Naive thymus-derived CD4-positive, alpha-beta T cell (primary cell): ENCODE measurements at regions of chr1 and their contacts with region 1.

Region 1: GRCh38 chr1:231162297-231162969 is 575 bp downstream of the TRIM67 start:
- DNase-seq: peak in 7 of 9 donors; percentile 18 to 52 (median 27)
- ATAC-seq: peak; percentile 57
- H3K4me3 ChIP-seq: no peak overlapping the region
- H3K4me3 Mint-ChIP-seq: peak overlapping the region in 4 of 10 donors; percentile 36 to 61 (median 49)
- H3K27ac ChIP-seq: no peak overlapping the region
- H3K27ac Mint-ChIP-seq: peak overlapping the region in 1 of 9 donors; percentile 52
- H3K4me1 ChIP-seq: peaks cover 0 to 7% of the 10 kb centered on the region in 2 donors
- H3K4me1 Mint-ChIP-seq: peaks cover 0 to 9% (median 2%) of the 10 kb centered on the region in 7 donors
- H3K27me3 ChIP-seq: peaks cover 0 to 9% of the 10 kb centered on the region in 2 donors
- H3K27me3 Mint-ChIP-seq: peaks cover 52 to 75% (median 67%) of the 10 kb centered on the region in 5 donors

Region 2: GRCh38 chr1:230426246-230427093 is 736.0 kb before region 1 on chr1 and contains the start of gene PGBD5:
- CTCF ChIA-PET with region 1: no interaction called
- POLR2A ChIA-PET with region 1: no interaction called
- intact Hi-C with region 1: loop called in 1 of 2 experiments (anchors 10 kb)
- DNase-seq: peak; percentile 5 to 79 (median 44)
- ATAC-seq: peak; percentile 84
- H3K4me3 ChIP-seq: no peak within 1 kb of the TSS
- H3K4me3 Mint-ChIP-seq: peak within 1 kb of the TSS; percentile 65 to 88 (median 77)
- H3K27ac ChIP-seq: no peak within 1 kb of the TSS
- H3K27ac Mint-ChIP-seq: peak within 1 kb of the TSS in 1 of 9 donors; percentile 3
- H3K4me1 ChIP-seq: peaks cover 0 to 3% of the 10 kb centered on the region in 2 donors
- H3K4me1 Mint-ChIP-seq: peaks cover 6 to 26% (median 14%) of the 10 kb centered on the region in 7 donors
- H3K27me3 ChIP-seq: peaks cover 0 to 9% of the 10 kb centered on the region in 2 donors
- H3K27me3 Mint-ChIP-seq: peaks cover 53 to 65% (median 63%) of the 10 kb centered on the region in 5 donors
- total RNA-seq, gene PGBD5: 0.36 TPM in 1 of 5 experiments, not detected in the others

Region 3: GRCh38 chr1:231177936-231178335 is 15.5 kb after region 1 on chr1:
- CTCF ChIA-PET with region 1: no interaction called
- POLR2A ChIA-PET with region 1: no interaction called
- intact Hi-C with region 1: no loop called
- DNase-seq: no peak
- ATAC-seq: no peak
- H3K4me3 ChIP-seq: no peak overlapping the region
- H3K4me3 Mint-ChIP-seq: no peak overlapping the region
- H3K27ac ChIP-seq: no peak overlapping the region
- H3K27ac Mint-ChIP-seq: no peak overlapping the region
- H3K4me1 ChIP-seq: no peaks in the 10 kb centered on the region
- H3K4me1 Mint-ChIP-seq: no peaks in the 10 kb centered on the region
- H3K27me3 ChIP-seq: peaks cover under 1 to 5% of the 10 kb centered on the region in 2 donors
- H3K27me3 Mint-ChIP-seq: peaks cover 56 to 71% (median 66%) of the 10 kb centered on the region in 5 donors